Upper lobe of right lung (tissue), 1 donor: ENCODE measurements at regions of chr7 and their contacts with region 1.

Region 1: DNA sequence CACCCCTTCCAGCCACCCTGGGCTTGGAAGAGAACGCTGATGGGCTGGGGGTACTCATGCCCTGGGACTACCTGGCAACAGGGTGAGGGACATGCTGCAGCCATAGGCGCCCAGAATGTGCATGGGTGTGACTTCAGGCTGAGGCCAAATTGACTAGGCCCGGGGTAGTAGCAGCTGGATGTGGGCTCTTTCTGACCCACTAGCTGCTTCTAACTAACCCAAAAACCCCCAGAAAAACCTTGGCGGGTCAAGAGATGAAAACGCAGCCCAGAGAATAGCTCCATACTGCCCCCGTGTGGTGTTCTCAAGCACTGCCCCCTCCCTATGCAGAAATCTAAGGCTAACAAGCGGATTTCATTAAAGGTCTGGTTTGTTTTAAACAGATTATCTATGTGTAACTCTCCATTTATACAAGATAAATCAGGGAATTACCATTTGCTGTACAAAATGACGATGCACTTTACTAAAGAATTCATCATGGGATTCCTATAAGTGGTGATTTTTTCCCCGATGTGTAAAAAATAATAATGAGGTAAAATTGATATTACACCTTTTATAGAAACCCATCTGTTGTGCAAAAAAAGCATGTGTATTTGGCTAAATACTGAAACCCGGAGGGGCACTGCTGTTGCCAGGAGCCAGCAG is 4.2 kb downstream of the SMARCD3 start:
- DNase-seq: no peak
- ATAC-seq: peak; percentile 29
- H3K4me3 ChIP-seq: no peak overlapping the region
- H3K27ac ChIP-seq: no peak overlapping the region
- H3K4me1 ChIP-seq: peaks cover 30% of the 10 kb centered on the region
- H3K27me3 ChIP-seq: peaks cover 23% of the 10 kb centered on the region
- CTCF ChIP-seq: peak; percentile 91

Region 2: DNA sequence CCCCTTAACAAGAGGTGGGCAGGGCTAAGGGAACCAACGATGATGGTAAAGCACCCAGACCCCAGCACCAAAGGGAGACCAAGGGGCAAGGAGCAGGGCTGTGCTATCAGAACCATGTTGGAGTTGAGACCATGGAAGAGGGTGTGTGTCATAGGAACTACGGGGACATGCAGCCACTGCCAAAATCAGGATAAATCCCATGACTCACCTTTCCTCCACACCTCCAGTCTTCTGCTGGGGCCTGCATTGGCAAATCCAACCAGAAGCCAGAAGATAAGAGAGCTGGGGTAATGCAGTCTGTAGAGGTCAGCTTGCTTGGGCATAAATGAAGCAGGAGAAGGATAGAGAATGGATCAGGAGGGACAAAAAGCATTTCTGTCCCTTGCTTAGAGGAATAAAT is 46.9 kb after region 1 on chr7:
- intact Hi-C with region 1: no loop called
- DNase-seq: no peak
- ATAC-seq: no peak
- H3K4me3 ChIP-seq: no peak overlapping the region
- H3K27ac ChIP-seq: no peak overlapping the region
- H3K4me1 ChIP-seq: peaks cover 4% of the 10 kb centered on the region
- H3K27me3 ChIP-seq: no peaks in the 10 kb centered on the region
- CTCF ChIP-seq: no peak

Region 3: DNA sequence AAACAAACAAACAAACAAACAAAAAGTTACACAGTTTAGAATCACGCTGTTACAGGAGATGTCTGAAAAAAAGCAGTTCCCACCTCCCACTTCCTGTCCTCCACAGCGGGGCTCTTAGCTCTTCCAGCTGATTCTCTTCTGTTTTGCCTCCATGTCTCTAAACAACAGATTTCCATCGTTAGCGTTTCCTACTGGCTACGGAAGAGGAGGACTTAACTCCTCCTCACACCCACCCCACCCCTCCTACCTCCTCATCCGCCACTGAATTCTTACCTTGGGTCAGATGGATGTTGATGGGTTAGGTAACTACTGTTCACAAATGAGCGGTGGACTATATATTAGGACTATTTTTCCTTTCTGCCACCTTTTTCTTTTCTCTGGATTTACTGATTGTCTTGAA is 60.5 kb after region 1 on chr7:
- intact Hi-C with region 1: loop called (anchors 10 kb)
- DNase-seq: no peak
- ATAC-seq: no peak
- H3K4me3 ChIP-seq: peak overlapping the region; percentile 14
- H3K27ac ChIP-seq: no peak overlapping the region
- H3K4me1 ChIP-seq: peaks cover 5% of the 10 kb centered on the region
- H3K27me3 ChIP-seq: peaks cover 19% of the 10 kb centered on the region
- CTCF ChIP-seq: no peak

Region 4: GRCh38 chr7:151599401-151600227 is 355.3 kb after region 1 on chr7:
- intact Hi-C with region 1: no loop called
- DNase-seq: no peak
- ATAC-seq: peak; percentile 79
- H3K4me3 ChIP-seq: no peak overlapping the region
- H3K27ac ChIP-seq: peak overlapping the region; percentile 2
- H3K4me1 ChIP-seq: peaks cover 5% of the 10 kb centered on the region
- H3K27me3 ChIP-seq: no peaks in the 10 kb centered on the region
- CTCF ChIP-seq: no peak